CD4-positive, alpha-beta memory T cell (primary cell): ENCODE measurements at regions of chr10 and their contacts with region 1.

Region 1: GRCh38 chr10:43461950-43462349 is 25.0 kb downstream of the ZNF487 start:
- DNase-seq: peak; percentile 58 to 75 (median 70)
- H3K4me3 ChIP-seq: no peak overlapping the region
- H3K4me3 Mint-ChIP-seq: peak overlapping the region in 1 of 8 donors; percentile 54
- H3K27ac ChIP-seq: no peak overlapping the region
- H3K27ac Mint-ChIP-seq: peak overlapping the region in 4 of 7 donors; percentile 20 to 71 (median 42)
- H3K4me1 ChIP-seq: peaks cover 2% of the 10 kb centered on the region
- H3K4me1 Mint-ChIP-seq: peaks cover 14 to 21% (median 16%) of the 10 kb centered on the region in 4 donors
- H3K27me3 ChIP-seq: no peaks in the 10 kb centered on the region
- H3K27me3 Mint-ChIP-seq: no peaks in the 10 kb centered on the region

Region 2: DNA sequence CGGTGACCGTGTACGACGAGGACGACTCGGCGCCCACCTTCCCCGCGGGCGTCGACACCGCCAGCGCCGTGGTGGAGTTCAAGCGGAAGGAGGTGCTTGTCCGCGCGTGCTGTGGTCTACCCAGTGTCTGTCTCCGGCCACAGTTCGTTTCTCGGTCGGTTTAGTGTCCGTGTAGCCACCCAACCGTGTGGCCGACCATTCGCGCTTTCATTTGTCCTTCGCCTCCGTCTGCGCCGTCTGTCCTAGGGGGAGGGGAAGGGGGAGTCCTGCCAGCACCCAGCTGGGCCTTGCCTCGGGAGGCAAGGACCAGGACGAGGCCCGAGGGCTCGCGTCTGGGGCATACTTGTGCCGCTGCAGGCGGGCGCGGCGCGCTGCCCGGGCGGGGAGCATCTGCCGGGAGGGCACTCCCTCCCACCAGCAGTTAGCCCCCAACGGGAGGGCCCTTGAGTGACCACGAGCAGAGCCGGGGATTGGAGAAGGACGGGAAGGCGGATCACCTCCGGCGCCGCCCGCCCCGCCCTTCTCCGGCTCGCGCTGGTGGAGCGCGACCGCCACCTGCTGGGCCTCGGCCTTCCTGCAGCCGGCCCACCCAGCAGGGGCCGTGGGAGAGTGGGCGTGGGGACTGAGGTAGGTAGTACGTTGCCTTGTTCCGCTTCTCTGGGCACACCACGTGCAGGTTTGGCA is 356.7 kb before region 1 on chr10:
- CTCF ChIA-PET with region 1: no interaction called
- POLR2A ChIA-PET with region 1: no interaction called
- intact Hi-C with region 1: loop called (anchors 1 kb)
- DNase-seq: peak; percentile 69 to 79 (median 71)
- H3K4me3 ChIP-seq: peak overlapping the region; percentile 76 to 77
- H3K4me3 Mint-ChIP-seq: peak overlapping the region; percentile 70 to 84 (median 80)
- H3K27ac ChIP-seq: peak overlapping the region; percentile 19
- H3K27ac Mint-ChIP-seq: no peak overlapping the region
- H3K4me1 ChIP-seq: peaks cover 15% of the 10 kb centered on the region
- H3K4me1 Mint-ChIP-seq: peaks cover 5 to 13% (median 7%) of the 10 kb centered on the region in 4 donors
- H3K27me3 ChIP-seq: no peaks in the 10 kb centered on the region
- H3K27me3 Mint-ChIP-seq: peaks cover 13 to 17% of the 10 kb centered on the region in 2 donors

Region 3: GRCh38 chr10:43265799-43266721 is 195.9 kb before region 1 on chr10:
- CTCF ChIA-PET with region 1: interaction called, 5 read pairs
- POLR2A ChIA-PET with region 1: no interaction called
- intact Hi-C with region 1: loop called (anchors 1 kb)
- DNase-seq: peak; percentile 60 to 62 (median 61)
- H3K4me3 ChIP-seq: peak overlapping the region in 1 of 2 donors; percentile 54
- H3K4me3 Mint-ChIP-seq: peak overlapping the region; percentile 85 to 93 (median 89)
- H3K27ac ChIP-seq: peak overlapping the region; percentile 15
- H3K27ac Mint-ChIP-seq: peak overlapping the region; percentile 53 to 91 (median 72)
- H3K4me1 ChIP-seq: peaks cover 10% of the 10 kb centered on the region
- H3K4me1 Mint-ChIP-seq: peaks cover 6 to 24% (median 15%) of the 10 kb centered on the region in 4 donors
- H3K27me3 ChIP-seq: peaks cover 17% of the 10 kb centered on the region
- H3K27me3 Mint-ChIP-seq: peaks cover 5 to 9% of the 10 kb centered on the region in 2 donors

Region 4: DNA sequence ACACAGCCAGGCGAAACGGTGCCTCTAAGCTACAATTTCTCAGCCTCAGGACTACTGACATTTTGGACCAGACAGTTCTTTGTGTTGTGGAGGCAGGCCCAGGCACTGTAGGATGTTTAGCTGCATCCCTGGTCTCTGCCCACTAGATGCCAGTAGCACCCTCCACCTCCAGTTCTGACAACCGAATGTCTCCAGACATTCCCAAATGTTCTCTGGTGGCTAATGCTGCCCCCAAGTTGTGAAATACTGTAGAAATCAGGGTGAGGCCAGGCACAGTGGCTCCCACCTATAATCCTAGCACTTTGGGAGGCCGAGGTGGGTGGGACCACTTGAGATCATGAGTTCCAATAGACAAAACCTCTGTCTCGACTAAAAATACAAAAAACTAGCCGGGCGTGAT is 71.2 kb before region 1 on chr10:
- CTCF ChIA-PET with region 1: interaction called, 12 read pairs
- POLR2A ChIA-PET with region 1: interaction called, 7 read pairs
- intact Hi-C with region 1: no loop called
- DNase-seq: peak in 4 of 5 donors; percentile 36 to 54 (median 42)
- H3K4me3 ChIP-seq: no peak overlapping the region
- H3K4me3 Mint-ChIP-seq: peak overlapping the region in 2 of 8 donors; percentile 3 to 6
- H3K27ac ChIP-seq: no peak overlapping the region
- H3K27ac Mint-ChIP-seq: peak overlapping the region; percentile 53 to 86 (median 80)
- H3K4me1 ChIP-seq: peaks cover 81% of the 10 kb centered on the region
- H3K4me1 Mint-ChIP-seq: peaks cover 63 to 94% (median 77%) of the 10 kb centered on the region in 4 donors
- H3K27me3 ChIP-seq: no peaks in the 10 kb centered on the region
- H3K27me3 Mint-ChIP-seq: no peaks in the 10 kb centered on the region